Caco-2 (cell line): ENCODE measurements at regions of chr1 and their contacts with region 1.

Region 1: GRCh38 chr1:192477630-192478029 is 97.9 kb upstream of the RGS1 start:
- DNase-seq: no peak
- H3K4me3 ChIP-seq: no peak overlapping the region
- H3K4me3 Mint-ChIP-seq: no peak overlapping the region
- H3K27ac Mint-ChIP-seq: no peak overlapping the region
- H3K4me1 ChIP-seq: no peaks in the 10 kb centered on the region
- H3K4me1 Mint-ChIP-seq: no peaks in the 10 kb centered on the region
- H3K27me3 ChIP-seq: no peaks in the 10 kb centered on the region
- H3K27me3 Mint-ChIP-seq: no peaks in the 10 kb centered on the region
- CTCF ChIP-seq: peak in 1 of 2 experiments; percentile 13

Region 2: GRCh38 chr1:192407206-192407605 is 70.4 kb before region 1 on chr1:
- CTCF ChIA-PET with region 1: no interaction called
- POLR2A ChIA-PET with region 1: no interaction called
- intact Hi-C with region 1: no loop called
- DNase-seq: no peak
- H3K4me3 ChIP-seq: no peak overlapping the region
- H3K4me3 Mint-ChIP-seq: no peak overlapping the region
- H3K27ac Mint-ChIP-seq: no peak overlapping the region
- H3K4me1 ChIP-seq: peaks cover 9% of the 10 kb centered on the region
- H3K4me1 Mint-ChIP-seq: no peaks in the 10 kb centered on the region
- H3K27me3 ChIP-seq: no peaks in the 10 kb centered on the region
- H3K27me3 Mint-ChIP-seq: no peaks in the 10 kb centered on the region
- CTCF ChIP-seq: no peak

Region 3: DNA sequence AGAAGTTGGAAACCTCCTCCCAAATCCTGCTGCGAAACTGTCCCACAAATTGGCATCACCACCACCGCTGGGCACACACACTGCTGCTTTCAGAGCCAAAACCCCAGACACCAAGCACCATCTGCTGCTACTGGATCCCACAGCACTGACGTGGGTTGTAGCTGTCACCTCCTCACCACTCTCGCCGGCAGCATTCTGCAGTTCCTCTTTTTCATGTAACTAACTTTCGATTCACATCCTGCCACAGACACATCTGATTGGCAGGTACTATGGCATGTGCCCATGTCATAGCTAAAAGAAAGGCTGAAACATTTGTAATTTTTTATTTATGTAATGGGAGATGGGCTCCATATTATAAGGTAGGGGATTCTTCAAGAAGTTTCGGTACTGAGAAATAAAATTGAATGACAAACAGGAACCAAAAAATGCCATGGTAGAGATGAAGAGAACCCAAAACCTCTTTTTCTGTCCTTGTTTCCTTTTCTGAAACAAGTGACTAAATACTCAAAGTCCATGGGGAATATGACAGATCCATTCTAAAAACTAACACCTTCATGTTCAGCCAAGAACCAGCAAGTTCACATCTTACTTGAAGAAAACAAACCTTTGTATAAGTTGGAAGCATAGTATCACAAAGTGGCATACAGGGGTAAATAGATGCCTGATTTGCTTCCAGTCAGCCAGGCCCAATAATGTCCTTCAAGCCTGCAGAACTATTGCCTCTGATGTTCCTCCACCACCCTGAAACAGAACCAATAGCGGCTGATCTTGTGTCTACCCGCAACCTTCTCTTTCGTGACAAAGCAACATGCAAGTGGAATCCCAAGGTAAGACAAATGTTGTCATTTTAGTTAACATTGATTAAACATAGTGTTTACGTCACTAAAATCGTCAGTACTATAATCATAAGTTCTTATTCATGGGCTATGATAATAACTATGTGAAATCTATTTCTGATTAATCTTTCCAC is 131.8 kb after region 1 on chr1:
- CTCF ChIA-PET with region 1: interaction called, 3 read pairs
- POLR2A ChIA-PET with region 1: no interaction called
- intact Hi-C with region 1: loop called (anchors 1 kb)
- DNase-seq: no peak
- H3K4me3 ChIP-seq: no peak overlapping the region
- H3K4me3 Mint-ChIP-seq: no peak overlapping the region
- H3K27ac Mint-ChIP-seq: no peak overlapping the region
- H3K4me1 ChIP-seq: no peaks in the 10 kb centered on the region
- H3K4me1 Mint-ChIP-seq: no peaks in the 10 kb centered on the region
- H3K27me3 ChIP-seq: no peaks in the 10 kb centered on the region
- H3K27me3 Mint-ChIP-seq: peaks cover 2% of the 10 kb centered on the region
- CTCF ChIP-seq: no peak

Region 4: DNA sequence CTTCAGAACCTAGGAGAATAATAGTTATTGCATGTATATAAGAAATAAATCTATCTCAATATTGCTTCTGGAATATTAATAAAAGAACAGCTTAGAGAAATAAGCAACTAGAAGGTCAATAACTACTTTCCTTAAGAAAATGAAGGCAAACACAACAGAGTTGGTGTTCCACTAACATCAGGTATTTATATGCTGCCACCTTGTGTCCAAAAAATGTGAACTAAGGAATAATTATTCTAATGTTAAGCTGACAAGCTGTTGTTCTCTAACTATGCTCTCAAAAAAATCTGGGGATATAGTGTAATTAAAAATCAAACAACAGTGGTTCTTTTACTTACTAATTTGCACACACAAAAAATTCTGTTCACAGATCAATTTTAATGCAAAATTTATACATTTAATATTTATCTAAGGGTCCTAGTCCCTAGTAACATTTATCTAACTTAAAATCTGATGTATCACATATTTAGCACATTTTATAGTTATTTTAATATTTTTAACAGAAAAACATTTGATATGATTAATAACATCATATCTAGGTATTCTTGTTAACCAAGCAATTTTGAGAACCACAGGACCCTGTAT is 541.9 kb after region 1 on chr1:
- CTCF ChIA-PET with region 1: interaction called, 6 read pairs
- POLR2A ChIA-PET with region 1: no interaction called
- intact Hi-C with region 1: loop called (anchors 1 kb)
- DNase-seq: peak in 1 of 2 experiments; percentile 63
- H3K4me3 ChIP-seq: no peak overlapping the region
- H3K4me3 Mint-ChIP-seq: no peak overlapping the region
- H3K27ac Mint-ChIP-seq: no peak overlapping the region
- H3K4me1 ChIP-seq: no peaks in the 10 kb centered on the region
- H3K4me1 Mint-ChIP-seq: no peaks in the 10 kb centered on the region
- H3K27me3 ChIP-seq: no peaks in the 10 kb centered on the region
- H3K27me3 Mint-ChIP-seq: no peaks in the 10 kb centered on the region
- CTCF ChIP-seq: peak; percentile 44 to 50